ENCODE measurements at regions of chr4 and their contacts with region 1.

Region 1: GRCh38 chr4:7313347-7313811 is 121.0 kb downstream of the SORCS2 start:
- DNase-seq: no peak
- ATAC-seq: peak in 1 of 8 donors; percentile 13
- H3K4me3 ChIP-seq: no peak overlapping the region
- H3K27ac ChIP-seq: no peak overlapping the region
- H3K4me1 ChIP-seq: peaks cover 0 to 10% (median 0%) of the 10 kb centered on the region in 9 donors
- H3K27me3 ChIP-seq: peaks cover 0 to 8% (median 0%) of the 10 kb centered on the region in 7 donors
- CTCF ChIP-seq: no peak

Region 2: DNA sequence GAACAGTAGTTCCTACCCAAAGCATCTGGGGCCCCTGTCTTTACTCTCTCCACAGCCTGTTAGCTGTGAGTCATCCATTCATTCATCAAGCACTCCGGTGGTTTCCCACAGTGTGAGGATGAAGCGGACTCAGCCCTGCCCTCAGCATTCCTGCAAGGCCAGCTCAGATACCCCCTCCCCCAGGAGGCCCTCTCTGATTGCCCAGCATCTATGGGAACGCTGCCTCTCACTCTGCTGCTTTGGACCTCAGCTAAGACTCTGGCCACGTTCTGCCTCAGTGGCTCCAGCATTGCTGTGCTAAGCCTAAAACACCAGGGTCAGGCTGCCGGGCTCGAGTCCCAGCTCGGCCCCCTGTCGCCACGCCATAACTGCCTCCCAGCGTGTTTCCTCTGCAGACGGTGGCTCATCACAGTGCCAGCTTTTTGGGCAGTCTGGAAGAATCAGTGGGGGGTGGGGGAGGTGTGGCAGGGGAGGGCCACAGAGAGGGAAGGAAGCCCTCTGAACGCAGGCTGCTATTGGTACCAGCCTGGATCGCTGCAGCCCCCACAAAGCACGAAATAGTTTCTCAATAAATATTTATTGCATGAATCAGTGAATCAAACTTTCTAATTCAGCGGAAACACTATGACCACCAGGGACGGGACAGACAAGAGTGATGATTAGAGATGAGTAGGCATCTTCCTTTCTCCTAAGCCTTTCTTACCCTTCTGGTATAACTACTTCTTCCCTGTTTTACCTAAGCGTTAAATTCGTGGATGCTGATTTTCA is 46.7 kb before region 1 on chr4:
- intact Hi-C with region 1: no loop called
- DNase-seq: no peak
- ATAC-seq: no peak
- H3K4me3 ChIP-seq: no peak overlapping the region
- H3K27ac ChIP-seq: no peak overlapping the region
- H3K4me1 ChIP-seq: peaks cover 0 to 2% (median under 1%) of the 10 kb centered on the region in 9 donors
- H3K27me3 ChIP-seq: no peaks in the 10 kb centered on the region
- CTCF ChIP-seq: no peak

Region 3: DNA sequence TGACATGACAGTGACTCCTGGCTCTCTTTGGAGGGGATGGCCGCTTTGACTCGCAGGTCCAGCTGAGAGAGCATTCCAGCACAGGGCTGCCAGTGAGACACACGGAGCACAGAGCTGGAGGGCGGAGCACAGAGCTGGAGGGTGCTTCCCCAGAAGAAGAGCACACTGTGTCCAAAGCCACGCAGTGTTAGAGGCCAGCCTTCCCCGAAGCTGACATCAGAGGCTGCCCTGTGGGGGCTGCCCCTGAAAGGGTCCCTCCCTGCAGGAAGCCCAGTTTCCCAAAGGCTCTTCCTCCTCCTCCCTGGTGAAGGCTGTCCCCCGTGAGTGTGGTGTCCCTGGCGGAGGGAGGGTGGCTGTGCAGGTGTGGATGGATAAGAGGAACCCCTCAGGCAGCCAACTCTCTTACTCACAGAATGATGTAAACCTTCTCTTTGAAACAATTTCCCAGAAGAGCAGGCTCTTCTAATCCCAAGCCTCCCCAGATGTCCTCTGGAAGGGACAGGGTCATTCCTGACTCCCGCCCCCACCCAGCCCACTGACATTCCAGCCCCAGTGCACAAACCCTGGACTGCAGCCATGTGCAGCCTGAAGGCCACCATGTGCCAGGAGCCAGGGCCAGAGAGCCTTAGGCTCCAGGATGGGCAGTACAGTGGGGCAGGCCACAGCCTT is 68.0 kb after region 1 on chr4:
- intact Hi-C with region 1: loop called in 1 of 10 experiments (anchors 5 kb)
- DNase-seq: peak in 1 of 2 donors; percentile 38
- ATAC-seq: peak; percentile 20 to 87 (median 66)
- H3K4me3 ChIP-seq: no peak overlapping the region
- H3K27ac ChIP-seq: peak overlapping the region in 1 of 10 donors; percentile 43
- H3K4me1 ChIP-seq: peaks cover 0 to 23% (median 5%) of the 10 kb centered on the region in 9 donors
- H3K27me3 ChIP-seq: peaks cover 0 to 4% (median 0%) of the 10 kb centered on the region in 7 donors
- CTCF ChIP-seq: peak in 1 of 9 donors; percentile 9

Region 4: DNA sequence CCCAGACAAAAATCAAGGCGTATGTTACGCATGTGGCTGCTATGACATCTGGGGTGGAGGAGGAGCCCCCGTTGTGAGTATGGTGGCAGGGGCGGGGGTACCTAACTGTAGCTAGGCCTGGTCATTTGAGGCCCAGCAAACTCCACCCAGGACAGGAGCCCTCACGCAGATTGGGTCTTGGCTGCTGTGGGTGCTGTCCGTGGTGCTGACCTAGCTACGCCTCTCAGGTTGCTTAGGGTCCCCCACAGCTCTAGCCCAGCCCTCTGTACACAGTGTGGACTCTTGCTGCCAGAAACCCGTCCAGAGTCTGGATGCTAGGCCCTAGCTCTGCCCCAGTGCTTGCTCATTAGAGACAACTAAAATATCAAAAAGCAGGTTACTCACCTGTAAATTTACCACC is 268.1 kb after region 1 on chr4:
- intact Hi-C with region 1: no loop called
- DNase-seq: peak; percentile 13 to 23
- ATAC-seq: peak in 1 of 8 donors; percentile 18
- H3K4me3 ChIP-seq: no peak overlapping the region
- H3K27ac ChIP-seq: no peak overlapping the region
- H3K4me1 ChIP-seq: no peaks in the 10 kb centered on the region
- H3K27me3 ChIP-seq: no peaks in the 10 kb centered on the region
- CTCF ChIP-seq: no peak